WTC11 (cell line): ENCODE measurements at regions of chrX and their contacts with region 1.

Region 1: GRCh38 chrX:71514367-71515038 is 18.4 kb upstream of the OGT start:
- DNase-seq: no peak
- ATAC-seq: no peak
- H3K4me3 Mint-ChIP-seq: no peak overlapping the region
- H3K27ac Mint-ChIP-seq: no peak overlapping the region
- H3K4me1 Mint-ChIP-seq: peaks cover 3% of the 10 kb centered on the region
- H3K27me3 Mint-ChIP-seq: no peaks in the 10 kb centered on the region
- CTCF ChIP-seq: no peak

Region 2: GRCh38 chrX:71496476-71496875 is 18.0 kb before region 1 on chrX:
- CTCF ChIA-PET with region 1: no interaction called
- POLR2A ChIA-PET with region 1: no interaction called
- DNase-seq: no peak
- ATAC-seq: no peak
- H3K4me3 Mint-ChIP-seq: no peak overlapping the region
- H3K27ac Mint-ChIP-seq: no peak overlapping the region
- H3K4me1 Mint-ChIP-seq: peaks cover 21% of the 10 kb centered on the region
- H3K27me3 Mint-ChIP-seq: no peaks in the 10 kb centered on the region
- CTCF ChIP-seq: no peak

Region 3: GRCh38 chrX:71612256-71612655 is 97.8 kb after region 1 on chrX:
- CTCF ChIA-PET with region 1: no interaction called
- POLR2A ChIA-PET with region 1: interaction called, 11 read pairs
- DNase-seq: no peak
- ATAC-seq: no peak
- H3K4me3 Mint-ChIP-seq: no peak overlapping the region
- H3K27ac Mint-ChIP-seq: no peak overlapping the region
- H3K4me1 Mint-ChIP-seq: no peaks in the 10 kb centered on the region
- H3K27me3 Mint-ChIP-seq: no peaks in the 10 kb centered on the region
- CTCF ChIP-seq: no peak